B cell (primary cell): ENCODE measurements at regions of chr17 and their contacts with region 1.

Region 1: DNA sequence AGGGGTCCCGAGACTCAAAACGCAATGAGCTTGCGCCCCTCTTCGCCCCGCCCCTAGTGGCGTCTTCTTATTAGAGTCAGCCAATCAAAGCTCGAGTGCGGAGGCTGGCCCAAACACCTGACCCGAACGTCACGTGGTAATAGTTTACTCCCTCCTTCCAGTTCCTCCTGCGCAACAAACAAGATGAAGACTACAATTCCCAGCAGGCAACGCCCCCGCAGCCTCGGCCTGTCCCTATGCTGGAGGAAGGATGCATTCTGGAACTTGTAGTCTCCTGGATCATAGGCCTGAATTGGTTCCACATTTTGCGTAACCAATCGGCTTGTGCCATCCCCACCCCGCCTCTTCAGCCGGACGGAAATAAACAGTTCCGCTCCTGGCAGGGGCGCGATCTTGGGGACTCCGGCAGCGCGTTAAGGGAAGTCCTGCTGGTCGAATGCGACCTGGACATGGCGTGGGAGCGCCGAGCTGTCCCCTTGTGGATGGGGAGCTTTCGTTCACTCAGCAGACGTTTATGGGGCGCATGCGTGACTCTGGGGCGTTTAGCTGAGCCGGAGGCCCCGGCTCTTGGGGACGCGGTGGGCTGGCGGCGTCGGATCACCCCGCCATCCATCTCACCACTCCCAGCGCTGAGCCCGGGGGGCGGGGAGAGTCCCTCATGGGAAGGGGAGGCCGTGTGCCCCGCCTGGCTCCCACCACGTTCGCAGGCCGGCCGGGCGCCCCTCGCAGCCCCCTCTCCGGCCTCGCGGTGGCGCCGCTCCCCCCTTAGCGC is at the start of gene WBP2:
- DNase-seq: peak; percentile 100
- ATAC-seq: peak; percentile 84
- H3K4me3 ChIP-seq: peak within 1 kb of the TSS; percentile 75 to 98 (median 94)
- H3K4me3 Mint-ChIP-seq: no peak within 1 kb of the TSS
- H3K27ac ChIP-seq: peak within 1 kb of the TSS; percentile 89 to 92
- H3K27ac Mint-ChIP-seq: no peak within 1 kb of the TSS
- H3K4me1 ChIP-seq: peaks cover 34 to 53% of the 10 kb centered on the region in 2 donors
- H3K4me1 Mint-ChIP-seq: peaks cover 42% of the 10 kb centered on the region
- H3K27me3 ChIP-seq: no peaks in the 10 kb centered on the region
- H3K27me3 Mint-ChIP-seq: no peaks in the 10 kb centered on the region
- CTCF ChIP-seq: peak; percentile 64
- total RNA-seq, gene WBP2: 132 and 140 TPM in 2 replicates

Region 2: DNA sequence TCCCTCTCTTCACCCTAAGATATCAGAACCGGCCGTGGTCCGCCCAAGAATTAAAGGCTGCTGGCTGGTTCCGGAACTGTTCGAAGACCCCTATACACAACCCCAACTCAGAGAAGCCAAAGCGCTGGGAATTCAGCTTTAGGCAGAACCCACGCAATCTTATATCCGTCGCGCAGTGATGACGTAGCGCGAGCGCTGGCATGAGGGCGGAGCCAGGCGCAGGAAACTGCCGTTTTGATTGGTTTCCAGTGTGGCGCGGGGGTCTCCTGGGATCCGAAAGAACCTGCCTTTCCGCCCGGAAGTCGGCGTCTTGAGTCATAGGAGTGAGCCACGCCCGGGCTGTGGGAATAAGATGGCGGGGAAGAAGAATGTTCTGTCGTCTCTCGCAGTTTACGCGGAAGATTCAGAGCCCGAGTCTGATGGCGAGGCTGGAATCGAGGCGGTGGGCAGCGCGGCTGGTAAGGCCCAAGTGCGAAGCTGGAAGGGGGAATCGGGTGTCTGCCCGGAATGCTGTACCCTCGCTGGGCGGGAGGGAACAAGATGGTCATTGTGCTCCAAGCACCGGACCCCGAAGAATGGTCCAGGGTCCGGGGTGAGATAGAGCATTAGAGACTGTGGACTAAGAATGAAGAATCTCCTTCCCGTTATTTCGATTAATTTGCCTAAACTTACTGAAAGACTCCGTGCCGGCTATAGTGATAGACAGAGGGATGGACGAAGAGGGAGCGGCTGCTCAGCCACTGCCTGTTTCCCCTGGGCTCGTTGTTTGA is 188.3 kb before region 1 on chr17 and contains the starts of genes RECQL5 and SAP30BP:
- CTCF ChIA-PET with region 1: no interaction called
- POLR2A ChIA-PET with region 1: interaction called, 5 read pairs
- intact Hi-C with region 1: loop called (anchors 10 kb)
- DNase-seq: peak; percentile 99
- ATAC-seq: peak; percentile 85
- H3K4me3 ChIP-seq: peak within 1 kb of the TSS; percentile 84 to 99 (median 98)
- H3K4me3 Mint-ChIP-seq: peak within 1 kb of the TSS; percentile 50
- H3K27ac ChIP-seq: peak within 1 kb of the TSS; percentile 84 to 89
- H3K27ac Mint-ChIP-seq: peak within 1 kb of the TSS; percentile 78
- H3K4me1 ChIP-seq: peaks cover 40 to 46% of the 10 kb centered on the region in 2 donors
- H3K4me1 Mint-ChIP-seq: peaks cover 34% of the 10 kb centered on the region
- H3K27me3 ChIP-seq: no peaks in the 10 kb centered on the region
- H3K27me3 Mint-ChIP-seq: no peaks in the 10 kb centered on the region
- CTCF ChIP-seq: no peak
- total RNA-seq, gene RECQL5: 56.6 and 58.5 TPM in 2 replicates
- total RNA-seq, gene SAP30BP: 148 and 174 TPM in 2 replicates

Region 3: GRCh38 chr17:75779231-75779986 is 76.1 kb before region 1 on chr17:
- CTCF ChIA-PET with region 1: interaction called, 15 read pairs
- POLR2A ChIA-PET with region 1: interaction called, 31 read pairs
- intact Hi-C with region 1: loop called (anchors 1 kb)
- DNase-seq: peak; percentile 99
- ATAC-seq: peak; percentile 62
- H3K4me3 ChIP-seq: peak overlapping the region; percentile 89 to 95 (median 95)
- H3K4me3 Mint-ChIP-seq: peak overlapping the region; percentile 94
- H3K27ac ChIP-seq: peak overlapping the region; percentile 88 to 97
- H3K27ac Mint-ChIP-seq: peak overlapping the region; percentile 99
- H3K4me1 ChIP-seq: peaks cover 36 to 59% of the 10 kb centered on the region in 2 donors
- H3K4me1 Mint-ChIP-seq: peaks cover 63% of the 10 kb centered on the region
- H3K27me3 ChIP-seq: no peaks in the 10 kb centered on the region
- H3K27me3 Mint-ChIP-seq: no peaks in the 10 kb centered on the region
- CTCF ChIP-seq: no peak

Region 4: DNA sequence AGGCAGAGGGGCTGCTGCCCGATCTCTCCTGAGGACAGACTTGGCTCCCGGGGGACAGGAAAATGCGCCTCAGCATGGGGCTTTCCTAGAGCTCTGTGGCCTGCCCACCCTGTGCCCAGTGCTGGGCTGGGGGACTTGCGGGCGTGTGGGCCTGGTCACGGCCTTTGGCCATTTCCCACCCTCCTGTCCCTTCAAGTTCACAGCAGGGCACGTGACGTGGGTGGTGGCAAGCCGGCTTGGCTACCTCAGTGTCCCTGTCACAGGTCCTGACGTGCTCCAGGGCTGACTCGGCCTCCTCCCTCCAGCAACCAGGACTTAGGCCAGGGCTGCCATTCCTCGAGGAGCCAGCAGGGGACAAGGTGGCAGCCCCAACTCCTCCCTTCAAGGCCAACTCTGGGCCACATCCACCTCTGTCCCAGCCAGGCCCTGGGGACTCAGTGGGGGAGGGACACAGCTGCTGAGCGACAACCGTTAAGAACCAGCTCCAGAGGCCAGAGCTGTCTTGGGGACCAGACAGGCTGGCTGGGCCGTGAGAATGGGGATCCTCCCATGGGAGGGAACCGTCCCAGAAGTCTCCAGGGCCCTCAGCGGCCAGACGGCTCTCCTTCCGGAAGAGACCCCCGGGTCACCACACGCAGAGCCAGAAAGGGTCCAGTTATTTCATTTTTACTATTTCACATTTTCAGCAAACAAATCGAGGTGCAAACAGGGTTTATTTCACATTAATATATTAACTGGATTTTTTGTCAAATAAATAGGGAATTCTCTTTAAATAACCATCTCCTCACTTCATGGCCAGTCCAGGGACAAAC is 10.2 kb before region 1 on chr17:
- CTCF ChIA-PET with region 1: interaction called, 53 read pairs
- POLR2A ChIA-PET with region 1: interaction called, 82 read pairs
- intact Hi-C with region 1: loop called (anchors 1 kb)
- DNase-seq: peak; percentile 86
- ATAC-seq: peak; percentile 87
- H3K4me3 ChIP-seq: peak overlapping the region in 4 of 5 experiments; percentile 72 to 86 (median 78)
- H3K4me3 Mint-ChIP-seq: peak overlapping the region; percentile 94
- H3K27ac ChIP-seq: peak overlapping the region; percentile 92 to 93
- H3K27ac Mint-ChIP-seq: peak overlapping the region; percentile 97
- H3K4me1 ChIP-seq: peaks cover 17 to 43% of the 10 kb centered on the region in 2 donors
- H3K4me1 Mint-ChIP-seq: peaks cover 26% of the 10 kb centered on the region
- H3K27me3 ChIP-seq: no peaks in the 10 kb centered on the region
- H3K27me3 Mint-ChIP-seq: no peaks in the 10 kb centered on the region
- CTCF ChIP-seq: peak; percentile 83

Region 5: GRCh38 chr17:75896415-75897159 is 41.1 kb after region 1 on chr17 and contains the start of gene TRIM65:
- CTCF ChIA-PET with region 1: interaction called, 21 read pairs
- POLR2A ChIA-PET with region 1: interaction called, 42 read pairs
- intact Hi-C with region 1: loop called (anchors 1 kb)
- DNase-seq: peak; percentile 86
- ATAC-seq: peak; percentile 86
- H3K4me3 ChIP-seq: peak within 1 kb of the TSS; percentile 14 to 80 (median 76)
- H3K4me3 Mint-ChIP-seq: peak within 1 kb of the TSS; percentile 85
- H3K27ac ChIP-seq: peak within 1 kb of the TSS; percentile 34 to 49
- H3K27ac Mint-ChIP-seq: peak within 1 kb of the TSS; percentile 82
- H3K4me1 ChIP-seq: peaks cover 16 to 19% of the 10 kb centered on the region in 2 donors
- H3K4me1 Mint-ChIP-seq: peaks cover 26% of the 10 kb centered on the region
- H3K27me3 ChIP-seq: no peaks in the 10 kb centered on the region
- H3K27me3 Mint-ChIP-seq: no peaks in the 10 kb centered on the region
- CTCF ChIP-seq: peak; percentile 41
- total RNA-seq, gene TRIM65: 39.2 and 40.7 TPM in 2 replicates

Region 6: DNA sequence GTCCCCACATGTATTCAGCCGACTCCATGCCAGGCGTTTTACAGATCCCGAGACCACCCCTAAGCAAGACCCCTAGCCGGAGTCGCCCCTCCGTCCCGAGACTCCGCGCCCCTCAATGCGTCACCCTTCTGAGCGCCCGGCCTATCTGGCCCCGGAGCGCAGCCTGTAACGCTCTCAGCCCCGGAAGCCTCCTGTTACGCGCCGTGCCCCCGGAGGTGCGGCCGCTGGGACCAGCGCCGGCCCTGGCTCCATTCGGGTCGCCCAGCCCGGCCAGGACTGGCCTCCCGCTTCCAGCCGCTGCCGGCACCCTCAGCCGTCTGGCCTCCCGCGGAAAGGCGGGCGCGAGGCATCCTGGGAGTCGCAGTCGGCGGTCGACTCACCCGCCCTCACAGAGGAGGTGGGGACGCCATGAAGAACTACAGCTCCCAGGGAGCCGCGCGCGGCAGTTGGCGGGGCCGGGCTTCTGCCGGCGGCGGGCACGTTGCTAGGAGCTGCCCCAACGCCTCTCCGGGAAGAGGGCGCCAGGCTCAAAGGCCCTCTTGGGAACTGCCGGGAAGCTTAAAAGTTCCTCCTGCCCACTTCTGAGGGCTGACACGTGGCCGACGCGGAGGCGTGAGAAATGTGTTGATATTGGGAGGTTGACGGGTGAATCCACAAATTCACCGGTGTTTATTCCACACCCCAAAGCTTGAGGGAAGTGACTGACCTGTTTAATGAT is 85.4 kb after region 1 on chr17 and contains the start of gene FBF1:
- CTCF ChIA-PET with region 1: no interaction called
- POLR2A ChIA-PET with region 1: interaction called, 3 read pairs
- intact Hi-C with region 1: loop called (anchors 1 kb)
- DNase-seq: peak; percentile 89
- ATAC-seq: peak; percentile 99
- H3K4me3 ChIP-seq: peak within 1 kb of the TSS; percentile 6 to 97 (median 81)
- H3K4me3 Mint-ChIP-seq: peak within 1 kb of the TSS; percentile 92
- H3K27ac ChIP-seq: peak within 1 kb of the TSS; percentile 47 to 82
- H3K27ac Mint-ChIP-seq: peak within 1 kb of the TSS; percentile 89
- H3K4me1 ChIP-seq: peaks cover 0 to 14% of the 10 kb centered on the region in 2 donors
- H3K4me1 Mint-ChIP-seq: peaks cover 12% of the 10 kb centered on the region
- H3K27me3 ChIP-seq: no peaks in the 10 kb centered on the region
- H3K27me3 Mint-ChIP-seq: no peaks in the 10 kb centered on the region
- CTCF ChIP-seq: no peak
- total RNA-seq, gene FBF1: 27.0 and 31.5 TPM in 2 replicates

Region 7: DNA sequence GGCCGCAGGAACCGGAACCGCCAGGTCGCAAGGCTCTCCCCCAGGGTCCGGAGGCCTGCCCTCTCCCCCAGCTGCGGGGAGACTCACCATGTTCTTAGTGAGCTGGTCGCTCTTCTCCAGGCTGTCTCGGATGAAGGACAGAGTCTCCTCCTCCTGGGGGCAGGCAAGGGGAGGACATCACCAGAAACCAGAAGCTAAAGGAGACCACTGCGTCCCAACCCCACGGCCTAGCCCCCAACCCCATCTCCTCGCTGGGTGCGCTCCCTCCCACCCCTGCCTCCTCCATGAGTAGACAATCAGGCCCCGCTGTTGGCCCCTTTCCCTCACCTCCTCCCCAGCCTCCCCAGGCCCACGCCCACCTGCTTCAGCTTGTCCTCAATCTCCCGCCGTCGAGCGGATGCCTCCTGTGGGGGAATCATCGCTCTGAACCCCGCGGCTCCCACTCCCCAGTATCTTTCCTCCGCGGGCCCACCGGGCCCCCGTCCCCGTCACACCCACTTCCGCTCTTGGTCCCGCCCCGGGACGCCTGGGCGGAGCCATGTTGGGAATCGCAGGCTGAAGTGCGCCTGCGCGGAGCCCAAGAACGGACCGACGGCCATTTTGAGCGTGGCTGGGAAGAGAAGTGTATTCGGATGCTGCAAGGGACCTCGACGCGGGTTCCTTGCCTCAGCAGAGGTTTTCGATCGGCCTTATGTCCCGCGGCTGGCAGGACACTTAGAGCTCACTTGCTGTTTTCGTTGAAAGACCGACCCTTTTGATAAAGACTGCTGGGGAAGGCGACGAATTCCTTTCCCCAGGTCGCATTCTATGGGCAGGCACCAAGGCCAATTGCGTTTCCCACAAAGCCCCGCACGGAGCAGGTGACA is 248.0 kb after region 1 on chr17 and contains the start of gene EXOC7:
- CTCF ChIA-PET with region 1: no interaction called
- POLR2A ChIA-PET with region 1: interaction called, 7 read pairs
- intact Hi-C with region 1: loop called (anchors 5 kb)
- DNase-seq: peak; percentile 96
- ATAC-seq: peak; percentile 97
- H3K4me3 ChIP-seq: peak within 1 kb of the TSS; percentile 68 to 93 (median 90)
- H3K4me3 Mint-ChIP-seq: peak within 1 kb of the TSS; percentile 97
- H3K27ac ChIP-seq: peak within 1 kb of the TSS; percentile 76 to 82
- H3K27ac Mint-ChIP-seq: peak within 1 kb of the TSS; percentile 97
- H3K4me1 ChIP-seq: peaks cover 11 to 22% of the 10 kb centered on the region in 2 donors
- H3K4me1 Mint-ChIP-seq: peaks cover 21% of the 10 kb centered on the region
- H3K27me3 ChIP-seq: no peaks in the 10 kb centered on the region
- H3K27me3 Mint-ChIP-seq: no peaks in the 10 kb centered on the region
- CTCF ChIP-seq: no peak
- total RNA-seq, gene EXOC7: 191 and 194 TPM in 2 replicates